ENCODE measurements at regions of chrX and their contacts with region 1.

Region 1: DNA sequence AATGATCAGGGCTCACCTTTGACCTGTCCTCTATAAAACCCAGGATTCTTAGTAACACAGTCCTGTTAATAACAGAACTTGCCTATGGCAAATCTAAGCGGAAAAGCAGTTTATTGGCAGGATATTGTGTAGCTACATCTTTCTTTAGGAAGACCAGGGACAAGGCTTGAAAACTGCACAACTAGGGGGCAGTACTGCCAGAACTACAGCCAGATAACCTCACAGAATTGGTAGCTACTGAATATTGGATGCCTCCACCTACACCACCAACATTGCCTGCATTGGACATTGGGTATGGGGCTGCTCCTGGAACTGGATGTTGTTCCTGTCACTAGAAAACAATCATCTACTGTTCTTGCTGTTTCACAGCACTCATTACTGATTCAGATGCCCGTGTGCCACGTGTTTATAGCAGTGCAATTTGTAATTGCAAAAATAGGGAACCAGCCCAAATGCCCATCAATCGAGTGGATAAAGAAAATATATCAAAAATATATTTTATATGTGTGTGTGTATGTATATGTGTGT is 47.4 kb downstream of the REPS2 start:
- H3K4me3 ChIP-seq: no peak overlapping the region
- H3K27ac ChIP-seq: no peak overlapping the region
- H3K4me1 ChIP-seq: no peaks in the 10 kb centered on the region
- CTCF ChIP-seq: no peak

Region 2: GRCh38 chrX:16212436-16212835 is 781.4 kb before region 1 on chrX:
- CTCF ChIA-PET with region 1: no interaction called
- POLR2A ChIA-PET with region 1: no interaction called
- H3K4me3 ChIP-seq: no peak overlapping the region
- H3K27ac ChIP-seq: no peak overlapping the region
- H3K4me1 ChIP-seq: no peaks in the 10 kb centered on the region
- CTCF ChIP-seq: no peak

Region 3: GRCh38 chrX:17007206-17007683 is 13.4 kb after region 1 on chrX:
- CTCF ChIA-PET with region 1: interaction called, 17 read pairs
- POLR2A ChIA-PET with region 1: no interaction called
- H3K4me3 ChIP-seq: no peak overlapping the region
- H3K27ac ChIP-seq: no peak overlapping the region
- H3K4me1 ChIP-seq: no peaks in the 10 kb centered on the region
- CTCF ChIP-seq: 0 out of 2 replicates have a peak, but pooled peaks have one; percentile 22

Region 4: DNA sequence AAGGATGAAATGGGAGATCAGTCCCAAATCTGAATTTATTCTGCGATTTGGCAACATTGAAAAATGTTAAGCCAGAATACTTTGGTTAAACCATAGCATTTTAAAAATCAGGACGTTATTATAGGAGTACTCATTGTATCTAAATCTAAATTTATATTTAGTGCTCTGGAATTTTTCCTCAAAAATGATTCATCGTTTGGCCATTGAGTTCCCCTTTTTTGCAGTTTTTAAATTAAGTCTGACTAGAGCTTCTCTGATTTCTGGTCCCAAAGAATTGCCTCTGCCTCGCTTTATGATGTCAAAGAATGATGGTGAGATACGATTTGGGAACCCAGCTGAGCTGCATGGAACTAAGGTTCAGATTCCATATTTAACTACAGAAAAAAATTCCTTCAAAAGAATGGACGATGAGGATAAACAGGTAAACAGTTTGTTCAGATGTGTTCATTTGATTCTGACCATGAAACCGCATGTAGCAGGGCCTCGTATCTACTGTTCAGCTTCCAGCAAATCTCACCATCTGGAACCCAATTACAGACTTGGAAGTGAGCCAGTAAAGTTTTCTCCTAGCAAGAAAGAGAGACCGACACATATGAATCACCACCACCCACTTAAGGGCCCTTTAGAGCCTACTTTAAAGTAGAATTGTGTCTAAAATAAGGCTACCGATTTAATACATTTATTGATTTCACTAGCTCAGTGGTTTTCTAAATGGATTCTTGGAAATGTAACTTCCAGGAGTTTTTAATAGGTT is 28.2 kb after region 1 on chrX:
- CTCF ChIA-PET with region 1: no interaction called
- POLR2A ChIA-PET with region 1: no interaction called
- H3K4me3 ChIP-seq: no peak overlapping the region
- H3K27ac ChIP-seq: no peak overlapping the region
- H3K4me1 ChIP-seq: peaks cover 7% of the 10 kb centered on the region
- CTCF ChIP-seq: no peak

Region 5: GRCh38 chrX:17038681-17039161 is 44.9 kb after region 1 on chrX:
- CTCF ChIA-PET with region 1: no interaction called
- POLR2A ChIA-PET with region 1: no interaction called
- H3K4me3 ChIP-seq: no peak overlapping the region
- H3K27ac ChIP-seq: no peak overlapping the region
- H3K4me1 ChIP-seq: peaks cover 12% of the 10 kb centered on the region
- CTCF ChIP-seq: no peak